ENCODE measurements at regions of chr1 and their contacts with region 1.

Region 1: GRCh38 chr1:6245086-6245868 is 1.3 kb downstream of the HES3 start:
- DNase-seq: peak; percentile 43 to 92 (median 75)
- ATAC-seq: peak; percentile 88
- H3K4me3 ChIP-seq: no peak overlapping the region
- H3K4me3 Mint-ChIP-seq: peak overlapping the region in 1 of 10 donors; percentile 43
- H3K27ac ChIP-seq: no peak overlapping the region
- H3K27ac Mint-ChIP-seq: no peak overlapping the region
- H3K4me1 ChIP-seq: peaks cover 3 to 13% of the 10 kb centered on the region in 2 donors
- H3K4me1 Mint-ChIP-seq: peaks cover 5 to 19% (median 12%) of the 10 kb centered on the region in 7 donors
- H3K27me3 ChIP-seq: peaks cover 20 to 45% of the 10 kb centered on the region in 2 donors
- H3K27me3 Mint-ChIP-seq: peaks cover 37 to 73% (median 45%) of the 10 kb centered on the region in 5 donors

Region 2: GRCh38 chr1:6052543-6053205 is 192.6 kb before region 1 on chr1:
- CTCF ChIA-PET with region 1: no interaction called
- POLR2A ChIA-PET with region 1: no interaction called
- intact Hi-C with region 1: loop called in 1 of 2 experiments (anchors 1 kb)
- DNase-seq: peak in 8 of 9 donors; percentile 17 to 52 (median 44)
- ATAC-seq: no peak
- H3K4me3 ChIP-seq: no peak overlapping the region
- H3K4me3 Mint-ChIP-seq: no peak overlapping the region
- H3K27ac ChIP-seq: no peak overlapping the region
- H3K27ac Mint-ChIP-seq: peak overlapping the region in 1 of 9 donors; percentile 89
- H3K4me1 ChIP-seq: no peaks in the 10 kb centered on the region
- H3K4me1 Mint-ChIP-seq: peaks cover 14 to 33% (median 24%) of the 10 kb centered on the region in 7 donors
- H3K27me3 ChIP-seq: no peaks in the 10 kb centered on the region
- H3K27me3 Mint-ChIP-seq: no peaks in the 10 kb centered on the region

Region 3: GRCh38 chr1:6205849-6206519 is 39.3 kb before region 1 on chr1 and contains the start of gene RNF207:
- CTCF ChIA-PET with region 1: no interaction called
- POLR2A ChIA-PET with region 1: no interaction called
- intact Hi-C with region 1: loop called in 1 of 2 experiments (anchors 1 kb)
- DNase-seq: peak in 5 of 9 donors; percentile 21 to 86 (median 28)
- ATAC-seq: peak; percentile 67
- H3K4me3 ChIP-seq: peak within 1 kb of the TSS; percentile 58
- H3K4me3 Mint-ChIP-seq: peak within 1 kb of the TSS; percentile 60 to 88 (median 80)
- H3K27ac ChIP-seq: no peak within 1 kb of the TSS
- H3K27ac Mint-ChIP-seq: peak within 1 kb of the TSS in 2 of 9 donors; percentile 36 to 69
- H3K4me1 ChIP-seq: peaks cover 0 to 5% of the 10 kb centered on the region in 2 donors
- H3K4me1 Mint-ChIP-seq: peaks cover 5 to 25% (median 15%) of the 10 kb centered on the region in 7 donors
- H3K27me3 ChIP-seq: peaks cover 0 to 8% of the 10 kb centered on the region in 2 donors
- H3K27me3 Mint-ChIP-seq: peaks cover 0 to 19% (median 6%) of the 10 kb centered on the region in 5 donors
- total RNA-seq, gene RNF207: 0.81 to 83.6 (median 3.1) TPM

Region 4: DNA sequence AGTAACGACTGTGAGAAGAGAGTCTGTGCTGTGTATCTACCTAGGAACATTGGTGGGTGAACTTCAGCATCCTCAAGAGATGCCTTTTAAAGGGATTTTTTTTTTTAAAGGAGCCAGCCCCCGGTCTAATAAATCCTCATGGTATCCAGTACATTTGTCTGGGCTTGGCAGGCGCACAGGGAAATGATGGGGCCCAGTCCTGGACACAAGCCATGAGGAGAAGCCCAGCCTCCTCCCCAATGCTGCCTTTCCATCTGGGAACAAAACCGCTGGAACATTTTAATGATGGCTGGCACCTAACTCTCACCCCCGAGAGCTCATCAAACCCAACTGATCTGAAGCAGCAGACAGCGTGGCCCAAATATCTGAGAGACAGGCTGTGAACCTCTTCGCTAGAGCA is 84.1 kb after region 1 on chr1:
- CTCF ChIA-PET with region 1: no interaction called
- POLR2A ChIA-PET with region 1: no interaction called
- intact Hi-C with region 1: no loop called
- DNase-seq: no peak
- ATAC-seq: no peak
- H3K4me3 ChIP-seq: no peak overlapping the region
- H3K4me3 Mint-ChIP-seq: no peak overlapping the region
- H3K27ac ChIP-seq: no peak overlapping the region
- H3K27ac Mint-ChIP-seq: no peak overlapping the region
- H3K4me1 ChIP-seq: no peaks in the 10 kb centered on the region
- H3K4me1 Mint-ChIP-seq: no peaks in the 10 kb centered on the region
- H3K27me3 ChIP-seq: no peaks in the 10 kb centered on the region
- H3K27me3 Mint-ChIP-seq: no peaks in the 10 kb centered on the region

Region 5: DNA sequence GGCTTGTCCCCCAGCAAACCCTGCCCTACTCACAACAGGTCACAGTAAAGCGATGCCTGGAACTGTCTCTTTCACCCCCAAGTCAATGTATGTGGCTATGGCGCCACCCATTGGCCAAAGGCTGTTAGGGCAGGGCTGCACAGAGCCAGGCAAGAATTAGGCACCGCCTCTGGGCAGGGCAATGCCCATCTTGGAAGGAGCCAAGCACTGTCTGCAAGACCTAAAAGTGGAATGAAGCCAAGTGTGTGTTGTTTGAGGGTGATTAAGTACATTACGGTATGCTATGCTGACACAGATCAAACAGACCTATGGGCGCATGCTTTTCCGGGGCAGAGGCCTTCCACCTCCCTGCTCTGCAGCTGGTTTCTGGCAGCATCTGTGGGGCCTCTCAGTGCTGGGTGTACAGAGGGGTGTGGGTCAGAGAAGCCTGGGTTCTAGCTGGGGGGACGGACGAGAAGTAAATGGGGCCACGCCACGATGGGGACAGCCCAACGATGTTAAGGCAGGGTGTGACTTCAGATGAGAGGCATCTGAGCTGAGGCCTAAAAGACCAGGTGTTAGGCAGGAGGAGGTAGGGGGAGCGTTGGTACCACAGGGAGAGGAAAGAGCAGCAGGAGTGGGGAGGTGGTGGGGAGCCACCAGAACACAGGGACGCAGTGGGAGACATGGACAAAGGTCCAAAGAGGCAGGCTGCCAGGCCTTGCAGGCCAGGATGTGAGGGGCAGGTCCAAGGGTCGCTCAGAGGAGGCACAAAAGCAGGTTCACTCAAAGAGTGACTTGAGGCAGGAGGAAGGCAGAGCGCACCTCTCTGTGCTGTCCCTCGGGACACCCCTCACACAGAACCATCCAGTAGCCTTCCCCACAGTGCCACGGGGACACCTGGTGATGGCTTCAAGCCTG is 98.5 kb after region 1 on chr1:
- CTCF ChIA-PET with region 1: interaction called, 6 read pairs
- POLR2A ChIA-PET with region 1: no interaction called
- intact Hi-C with region 1: loop called (anchors 1 kb)
- DNase-seq: peak; percentile 19 to 67 (median 49)
- ATAC-seq: peak; percentile 73
- H3K4me3 ChIP-seq: no peak overlapping the region
- H3K4me3 Mint-ChIP-seq: no peak overlapping the region
- H3K27ac ChIP-seq: no peak overlapping the region
- H3K27ac Mint-ChIP-seq: peak overlapping the region in 1 of 9 donors; percentile 25
- H3K4me1 ChIP-seq: peaks cover 12 to 13% of the 10 kb centered on the region in 2 donors
- H3K4me1 Mint-ChIP-seq: peaks cover 9 to 24% (median 11%) of the 10 kb centered on the region in 7 donors
- H3K27me3 ChIP-seq: no peaks in the 10 kb centered on the region
- H3K27me3 Mint-ChIP-seq: no peaks in the 10 kb centered on the region

Region 6: DNA sequence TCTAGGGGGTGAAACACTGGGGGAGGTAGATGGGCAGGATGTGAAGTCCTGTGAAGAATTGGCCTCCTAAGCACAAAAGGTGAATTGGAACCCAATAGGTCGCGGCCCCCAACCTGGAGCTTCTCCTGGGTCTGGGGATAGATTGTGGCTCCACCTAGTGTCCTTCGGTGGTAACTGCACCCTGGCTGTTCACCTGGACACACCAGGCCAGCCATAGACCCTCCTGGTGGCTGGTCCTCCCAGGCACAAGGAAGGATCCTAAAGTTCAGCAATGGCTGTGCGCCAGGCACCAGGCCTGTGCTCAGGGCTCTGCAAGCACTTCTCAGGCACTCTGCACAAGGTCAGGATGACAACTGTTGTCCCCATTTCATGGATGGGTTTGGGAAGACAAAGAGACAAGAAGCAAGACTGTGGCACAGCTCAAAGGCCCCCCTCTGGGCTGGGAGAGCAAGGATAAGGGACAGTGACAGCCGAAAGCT is 192.8 kb after region 1 on chr1:
- CTCF ChIA-PET with region 1: interaction called, 6 read pairs
- POLR2A ChIA-PET with region 1: no interaction called
- intact Hi-C with region 1: loop called in 1 of 2 experiments (anchors 1 kb)
- DNase-seq: peak; percentile 55 to 79 (median 66)
- ATAC-seq: peak; percentile 74
- H3K4me3 ChIP-seq: no peak overlapping the region
- H3K4me3 Mint-ChIP-seq: peak overlapping the region in 4 of 10 donors; percentile 4 to 58 (median 22)
- H3K27ac ChIP-seq: no peak overlapping the region
- H3K27ac Mint-ChIP-seq: peak overlapping the region in 3 of 9 donors; percentile 38 to 74 (median 67)
- H3K4me1 ChIP-seq: no peaks in the 10 kb centered on the region
- H3K4me1 Mint-ChIP-seq: peaks cover 0 to 14% (median 9%) of the 10 kb centered on the region in 7 donors
- H3K27me3 ChIP-seq: peaks cover 0 to 9% of the 10 kb centered on the region in 2 donors
- H3K27me3 Mint-ChIP-seq: peaks cover 18 to 48% (median 20%) of the 10 kb centered on the region in 5 donors

Region 7: GRCh38 chr1:6646499-6647148 is 401.3 kb after region 1 on chr1:
- CTCF ChIA-PET with region 1: no interaction called
- POLR2A ChIA-PET with region 1: no interaction called
- intact Hi-C with region 1: loop called in 1 of 2 experiments (anchors 2 kb)
- DNase-seq: peak in 7 of 9 donors; percentile 33 to 64 (median 54)
- ATAC-seq: peak; percentile 70
- H3K4me3 ChIP-seq: no peak overlapping the region
- H3K4me3 Mint-ChIP-seq: no peak overlapping the region
- H3K27ac ChIP-seq: no peak overlapping the region
- H3K27ac Mint-ChIP-seq: no peak overlapping the region
- H3K4me1 ChIP-seq: no peaks in the 10 kb centered on the region
- H3K4me1 Mint-ChIP-seq: peaks cover 0 to 6% (median 0%) of the 10 kb centered on the region in 7 donors
- H3K27me3 ChIP-seq: no peaks in the 10 kb centered on the region
- H3K27me3 Mint-ChIP-seq: no peaks in the 10 kb centered on the region